MCF 10A (cell line): ENCODE measurements at regions of chr2 and their contacts with region 1.

Region 1: DNA sequence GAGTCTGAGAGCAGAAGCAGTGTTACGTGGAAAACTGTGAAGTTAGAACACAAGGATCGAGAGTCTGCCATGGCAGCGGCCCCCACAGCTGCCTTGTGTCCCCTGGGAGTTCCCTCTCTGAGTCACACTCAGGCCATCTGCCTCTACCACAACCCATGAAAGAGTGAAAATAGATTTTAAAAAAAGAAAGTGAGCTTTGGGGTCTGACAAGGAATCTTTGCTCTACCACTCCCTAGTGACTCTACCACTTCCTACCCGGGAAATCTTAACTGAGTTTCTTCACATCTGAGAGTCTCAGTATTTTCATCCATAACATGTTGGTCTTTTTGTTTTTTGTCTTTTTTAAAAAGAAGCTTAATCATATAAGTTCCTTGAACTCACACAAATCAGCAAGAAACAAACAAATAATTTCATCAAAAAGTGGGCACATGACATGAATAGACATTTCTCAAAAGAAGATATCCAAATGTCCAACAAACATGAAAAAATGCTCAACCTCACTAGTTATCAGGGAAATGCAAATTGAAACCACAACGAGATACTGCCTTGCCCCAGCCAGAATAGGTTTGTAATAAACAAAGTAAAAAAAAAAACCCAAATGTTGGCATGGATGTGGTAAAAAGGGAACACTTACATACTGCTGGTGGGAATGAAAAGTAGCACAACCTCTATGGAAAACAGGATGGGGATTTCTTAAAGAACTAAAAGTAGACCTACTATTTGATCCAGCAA is 2.4 kb upstream of the MSGN1 start:
- DNase-seq: no peak
- H3K4me3 Mint-ChIP-seq: no peak overlapping the region
- H3K27ac Mint-ChIP-seq: peak overlapping the region; percentile 73
- H3K4me1 Mint-ChIP-seq: peaks cover 39% of the 10 kb centered on the region
- H3K27me3 Mint-ChIP-seq: no peaks in the 10 kb centered on the region
- CTCF ChIP-seq: no peak

Region 2: DNA sequence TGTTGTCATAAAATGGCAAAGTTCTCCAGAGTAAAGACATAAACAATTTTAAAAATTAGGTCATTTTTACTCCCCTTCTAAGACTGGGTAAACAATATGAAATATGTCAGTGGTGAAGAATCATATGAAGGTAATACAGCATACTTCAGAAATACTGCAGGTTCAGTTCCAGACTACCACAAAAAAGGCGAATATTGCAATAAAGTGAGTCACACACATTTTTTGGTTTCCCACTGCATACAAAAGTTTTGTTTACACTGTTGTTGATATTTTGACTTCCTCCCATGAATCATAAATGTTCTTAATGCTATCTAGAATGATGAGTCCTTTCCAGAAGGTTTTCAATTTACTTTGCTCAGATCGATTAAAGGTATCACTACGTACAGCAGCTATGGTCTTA is 133.8 kb before region 1 on chr2:
- CTCF ChIA-PET with region 1: no interaction called
- POLR2A ChIA-PET with region 1: no interaction called
- intact Hi-C with region 1: no loop called
- DNase-seq: peak; percentile 14
- H3K4me3 Mint-ChIP-seq: no peak overlapping the region
- H3K27ac Mint-ChIP-seq: peak overlapping the region; percentile 63
- H3K4me1 Mint-ChIP-seq: peaks cover 6% of the 10 kb centered on the region
- H3K27me3 Mint-ChIP-seq: no peaks in the 10 kb centered on the region
- CTCF ChIP-seq: no peak

Region 3: GRCh38 chr2:17759805-17760204 is 54.1 kb before region 1 on chr2:
- CTCF ChIA-PET with region 1: interaction called, 12 read pairs
- POLR2A ChIA-PET with region 1: interaction called, 136 read pairs
- intact Hi-C with region 1: no loop called
- DNase-seq: peak; percentile 79
- H3K4me3 Mint-ChIP-seq: no peak overlapping the region
- H3K27ac Mint-ChIP-seq: peak overlapping the region; percentile 79
- H3K4me1 Mint-ChIP-seq: peaks cover 31% of the 10 kb centered on the region
- H3K27me3 Mint-ChIP-seq: no peaks in the 10 kb centered on the region
- CTCF ChIP-seq: no peak

Region 4: DNA sequence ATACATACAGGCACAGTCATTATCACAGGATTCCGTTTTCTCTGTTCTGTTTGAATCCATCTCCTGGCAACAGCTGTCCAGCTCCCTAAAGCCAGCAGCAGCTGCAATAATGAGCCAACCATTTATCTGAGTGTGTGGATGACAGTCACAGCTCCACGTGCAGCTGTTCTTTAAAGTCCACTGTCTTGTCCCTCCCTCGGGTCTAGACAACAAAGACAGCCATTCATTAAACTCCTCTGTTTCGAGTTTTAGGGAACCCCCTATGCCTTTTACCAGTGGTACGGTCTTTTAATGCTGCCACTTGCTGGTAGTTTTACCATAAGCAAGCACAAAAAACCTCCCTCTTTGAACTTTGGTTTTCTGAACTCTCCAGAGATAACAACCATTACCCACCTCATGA is 13.7 kb before region 1 on chr2:
- CTCF ChIA-PET with region 1: no interaction called
- POLR2A ChIA-PET with region 1: interaction called, 10 read pairs
- intact Hi-C with region 1: no loop called
- DNase-seq: no peak
- H3K4me3 Mint-ChIP-seq: no peak overlapping the region
- H3K27ac Mint-ChIP-seq: no peak overlapping the region
- H3K4me1 Mint-ChIP-seq: no peaks in the 10 kb centered on the region
- H3K27me3 Mint-ChIP-seq: no peaks in the 10 kb centered on the region
- CTCF ChIP-seq: no peak

Region 5: DNA sequence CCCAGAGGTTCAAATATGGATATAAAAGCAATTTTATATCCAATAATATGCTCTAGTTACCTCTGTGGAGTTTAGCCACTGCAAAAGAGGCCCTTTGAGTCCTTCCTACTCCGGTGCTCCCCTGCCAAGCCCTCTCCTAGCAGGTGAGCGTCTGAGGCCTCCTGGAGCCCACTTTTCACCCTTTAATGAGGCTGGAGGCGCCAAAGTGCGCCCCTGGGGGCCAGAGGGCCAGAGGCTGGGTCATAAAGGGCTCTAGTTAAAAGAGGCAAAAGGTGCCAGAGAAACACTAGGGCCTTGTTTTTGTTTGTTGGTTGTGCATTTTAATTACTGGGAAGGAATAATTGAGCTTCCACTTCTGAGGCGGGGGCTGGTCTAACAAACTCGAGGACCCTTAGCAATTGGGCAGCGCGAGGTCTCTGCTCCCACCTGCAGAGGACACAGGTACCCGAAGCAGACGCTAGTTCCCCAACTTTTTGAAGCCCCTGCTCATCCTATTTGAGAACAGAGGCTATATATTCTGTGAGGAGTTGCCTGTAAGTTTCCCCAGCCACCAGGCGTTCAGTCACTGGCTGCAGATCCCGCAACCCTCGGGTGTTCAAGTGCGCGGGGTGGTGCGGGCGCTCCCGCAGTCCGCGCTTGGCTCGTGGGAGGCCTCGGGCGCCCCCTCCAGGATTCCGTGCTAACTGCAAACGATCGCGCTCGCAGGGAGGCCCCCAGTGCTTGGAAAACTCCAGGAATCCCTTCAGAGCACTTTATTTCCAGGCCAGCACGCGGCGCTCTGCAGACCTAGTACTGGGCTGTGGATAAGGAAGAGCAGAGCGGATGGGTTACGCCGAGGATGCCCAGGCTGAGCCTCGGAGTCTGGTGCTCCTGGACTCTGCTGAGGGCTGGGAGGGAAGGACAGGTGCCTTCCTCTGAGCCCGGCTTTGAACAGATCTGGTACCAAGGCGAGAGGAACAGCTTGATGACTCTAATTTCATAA is 16.4 kb after region 1 on chr2:
- CTCF ChIA-PET with region 1: interaction called, 26 read pairs
- POLR2A ChIA-PET with region 1: interaction called, 11 read pairs
- intact Hi-C with region 1: no loop called
- DNase-seq: peak; percentile 83
- H3K4me3 Mint-ChIP-seq: peak overlapping the region; percentile 48
- H3K27ac Mint-ChIP-seq: no peak overlapping the region
- H3K4me1 Mint-ChIP-seq: peaks cover 6% of the 10 kb centered on the region
- H3K27me3 Mint-ChIP-seq: no peaks in the 10 kb centered on the region
- CTCF ChIP-seq: peak; percentile 86